ENCODE measurements at regions of chr14 and their contacts with region 1.

Region 1: GRCh38 chr14:52146504-52146903 is 77.6 kb upstream of the NID2 start:
- DNase-seq: no peak
- ATAC-seq: no peak
- H3K4me3 ChIP-seq: no peak overlapping the region
- H3K27ac ChIP-seq: no peak overlapping the region
- H3K4me1 ChIP-seq: no peaks in the 10 kb centered on the region
- H3K27me3 ChIP-seq: no peaks in the 10 kb centered on the region

Region 2: GRCh38 chr14:51917193-51917592 is 229.3 kb before region 1 on chr14:
- intact Hi-C with region 1: loop called in 1 of 4 experiments (anchors 5 kb)
- DNase-seq: peak in 1 of 3 donors; percentile 11
- ATAC-seq: peak in 1 of 2 donors; percentile 55
- H3K4me3 ChIP-seq: no peak overlapping the region
- H3K27ac ChIP-seq: no peak overlapping the region
- H3K4me1 ChIP-seq: peaks cover 4% of the 10 kb centered on the region
- H3K27me3 ChIP-seq: no peaks in the 10 kb centered on the region

Region 3: DNA sequence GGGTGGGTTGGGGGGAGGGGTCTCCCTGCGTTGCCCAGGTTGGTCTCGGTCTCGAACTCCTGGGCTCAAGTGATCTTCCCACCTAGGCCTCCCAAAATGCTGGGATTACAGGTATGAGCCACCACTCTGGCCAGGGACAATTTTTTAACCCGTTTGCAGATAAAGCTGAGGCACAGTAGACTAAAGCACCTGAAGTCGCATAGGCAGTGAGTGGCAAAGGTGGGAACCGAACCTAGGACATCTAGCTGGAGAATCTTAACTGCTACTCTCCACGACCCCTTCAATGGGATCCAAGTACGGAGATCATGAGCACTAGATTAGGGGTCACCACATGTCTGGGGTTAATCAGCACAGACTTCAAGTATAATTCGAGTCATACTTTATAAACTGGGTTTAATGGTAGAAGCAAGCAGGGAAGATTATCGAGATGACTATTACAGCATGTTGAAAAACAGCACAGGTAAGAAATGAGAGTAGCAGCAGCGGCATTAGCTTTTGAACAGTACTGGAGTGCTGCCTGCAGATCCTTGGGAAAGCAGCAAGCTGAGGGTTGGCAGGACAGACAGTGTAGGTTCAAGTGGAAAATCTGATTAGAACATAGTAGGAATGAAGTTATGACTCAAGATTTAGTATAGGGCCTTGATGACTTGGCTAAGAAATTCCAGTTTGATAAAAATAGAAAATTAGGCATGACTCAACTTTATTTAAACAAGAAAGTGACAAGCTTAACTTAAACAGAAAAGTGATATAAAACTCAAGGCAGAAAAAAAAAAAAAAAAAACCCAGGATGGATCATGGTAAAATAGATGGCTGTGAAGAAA is 101.5 kb before region 1 on chr14:
- intact Hi-C with region 1: no loop called
- DNase-seq: no peak
- ATAC-seq: peak in 1 of 2 donors; percentile 58
- H3K4me3 ChIP-seq: no peak overlapping the region
- H3K27ac ChIP-seq: no peak overlapping the region
- H3K4me1 ChIP-seq: peaks cover 20% of the 10 kb centered on the region
- H3K27me3 ChIP-seq: no peaks in the 10 kb centered on the region

Measured in right cardiac atrium (tissue), 5 donors.